Activated CD4-positive, alpha-beta T cell treated with anti-CD3 and anti-CD28 coated beads for 36 hours (primary cell): ENCODE measurements at regions of chr22 and their contacts with region 1.

Region 1: DNA sequence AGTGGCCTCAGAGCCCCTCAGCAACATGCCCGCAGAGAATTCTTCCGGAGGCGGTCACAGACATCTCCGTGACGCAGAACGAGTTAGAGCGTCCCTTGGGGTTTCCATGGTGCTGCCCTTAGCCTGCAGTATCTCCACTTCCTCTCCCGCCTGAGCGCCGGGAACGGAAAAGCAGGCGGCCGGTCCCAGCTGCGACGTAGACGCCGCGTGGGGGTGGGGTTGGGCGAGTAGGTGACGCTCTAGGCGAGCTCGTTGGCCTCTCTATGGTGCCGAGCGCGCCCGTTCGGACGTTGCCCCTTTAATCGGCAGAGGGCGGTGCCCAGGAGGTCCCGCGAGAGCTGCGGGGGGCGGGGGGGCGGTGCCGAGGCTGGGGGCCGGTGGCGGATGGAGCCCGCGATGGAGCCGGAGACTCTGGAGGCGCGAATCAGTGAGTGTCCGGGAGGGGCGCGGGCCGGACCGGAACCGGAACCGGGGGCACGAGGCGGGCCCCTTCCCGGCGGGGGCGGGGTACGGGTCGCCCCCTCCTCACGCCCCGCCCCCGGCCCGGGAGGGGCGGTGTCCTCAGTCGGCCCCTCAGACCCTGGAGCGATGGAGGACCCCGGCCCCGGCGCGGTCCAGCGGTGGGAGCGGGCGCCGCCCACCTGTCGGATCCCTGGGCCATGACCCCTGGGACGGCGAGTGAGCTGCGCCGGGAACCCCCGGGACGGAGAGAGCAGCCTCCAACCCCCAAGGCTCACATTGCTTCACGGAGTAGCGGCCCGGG is at the start of gene GGA1:
- DNase-seq: peak; percentile 99
- ATAC-seq: peak; percentile 82
- H3K4me3 Mint-ChIP-seq: peak within 1 kb of the TSS; percentile 89
- H3K27ac Mint-ChIP-seq: peak within 1 kb of the TSS; percentile 99
- H3K4me1 Mint-ChIP-seq: peaks cover 51% of the 10 kb centered on the region
- H3K27me3 Mint-ChIP-seq: no peaks in the 10 kb centered on the region
- total RNA-seq, gene GGA1: 55.4 to 66.6 TPM

Region 2: GRCh38 chr22:37486224-37486845 is 122.3 kb before region 1 on chr22 and contains the start of gene MFNG:
- CTCF ChIA-PET with region 1: interaction called, 3 read pairs
- POLR2A ChIA-PET with region 1: no interaction called
- intact Hi-C with region 1: loop called in 1 of 2 experiments (anchors 1 kb)
- DNase-seq: peak; percentile 89
- ATAC-seq: peak; percentile 70
- H3K4me3 Mint-ChIP-seq: peak within 1 kb of the TSS; percentile 92
- H3K27ac Mint-ChIP-seq: peak within 1 kb of the TSS; percentile 92
- H3K4me1 Mint-ChIP-seq: peaks cover 64% of the 10 kb centered on the region
- H3K27me3 Mint-ChIP-seq: no peaks in the 10 kb centered on the region
- total RNA-seq, gene MFNG: 108 to 125 TPM

Region 3: GRCh38 chr22:37623075-37624016 is 14.7 kb after region 1 on chr22:
- CTCF ChIA-PET with region 1: interaction called, 17 read pairs
- POLR2A ChIA-PET with region 1: interaction called, 4 read pairs
- intact Hi-C with region 1: loop called in 1 of 2 experiments (anchors 2 kb)
- DNase-seq: peak; percentile 88
- ATAC-seq: peak; percentile 83
- H3K4me3 Mint-ChIP-seq: no peak overlapping the region
- H3K27ac Mint-ChIP-seq: peak overlapping the region; percentile 89
- H3K4me1 Mint-ChIP-seq: peaks cover 43% of the 10 kb centered on the region
- H3K27me3 Mint-ChIP-seq: no peaks in the 10 kb centered on the region

Region 4: DNA sequence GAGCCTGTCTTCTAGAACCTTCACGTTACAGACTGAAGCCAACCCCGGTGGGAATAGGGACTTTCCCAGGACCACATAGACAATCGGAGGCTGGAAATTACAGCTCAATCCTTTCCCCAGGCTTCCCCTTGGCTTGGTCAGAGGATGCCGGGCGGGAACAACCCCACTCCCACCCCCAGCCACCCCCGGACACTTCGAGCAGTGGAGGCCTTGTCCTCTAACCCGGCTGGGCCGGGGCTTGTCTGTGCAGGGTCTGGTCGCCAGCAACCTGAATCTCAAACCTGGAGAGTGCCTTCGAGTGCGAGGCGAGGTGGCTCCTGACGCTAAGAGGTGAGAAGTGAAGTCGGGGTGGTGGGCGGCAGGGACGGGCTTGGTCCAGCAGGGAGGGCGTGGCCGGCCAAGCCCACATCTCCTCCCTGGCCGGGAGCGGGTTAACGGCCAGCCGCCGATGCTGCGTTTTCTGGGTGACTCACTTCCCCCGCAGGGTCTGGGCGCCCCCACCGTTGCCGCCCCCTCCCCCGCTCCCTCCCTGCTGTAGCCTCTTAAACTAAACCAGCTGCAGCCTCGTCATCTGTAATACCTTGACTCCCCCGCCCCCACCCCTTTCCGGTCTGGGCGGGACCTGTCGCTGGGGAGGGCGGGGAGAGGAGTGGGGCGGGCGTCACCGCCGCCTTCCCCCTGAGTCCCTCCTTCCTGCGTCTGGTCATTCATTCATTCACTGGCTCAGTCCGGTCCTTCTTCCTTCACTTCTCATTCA is 68.3 kb after region 1 on chr22:
- CTCF ChIA-PET with region 1: interaction called, 11 read pairs
- POLR2A ChIA-PET with region 1: interaction called, 4 read pairs
- intact Hi-C with region 1: loop called (anchors 1 to 2 kb)
- DNase-seq: peak; percentile 97
- ATAC-seq: peak; percentile 78
- H3K4me3 Mint-ChIP-seq: peak overlapping the region; percentile 89
- H3K27ac Mint-ChIP-seq: peak overlapping the region; percentile 96
- H3K4me1 Mint-ChIP-seq: peaks cover 57% of the 10 kb centered on the region
- H3K27me3 Mint-ChIP-seq: no peaks in the 10 kb centered on the region

Region 5: GRCh38 chr22:37807410-37808293 is 199.0 kb after region 1 on chr22 and contains the start of gene GCAT:
- CTCF ChIA-PET with region 1: no interaction called
- POLR2A ChIA-PET with region 1: no interaction called
- intact Hi-C with region 1: loop called in 1 of 2 experiments (anchors 1 kb)
- DNase-seq: peak; percentile 97
- ATAC-seq: peak; percentile 97
- H3K4me3 Mint-ChIP-seq: peak within 1 kb of the TSS; percentile 78
- H3K27ac Mint-ChIP-seq: peak within 1 kb of the TSS; percentile 31
- H3K4me1 Mint-ChIP-seq: peaks cover 41% of the 10 kb centered on the region
- H3K27me3 Mint-ChIP-seq: peaks cover 37% of the 10 kb centered on the region
- total RNA-seq, gene GCAT: 21.3 to 22.4 TPM

Region 6: GRCh38 chr22:38181453-38182247 is 573.0 kb after region 1 on chr22 and contains the start of gene PLA2G6:
- CTCF ChIA-PET with region 1: no interaction called
- POLR2A ChIA-PET with region 1: no interaction called
- intact Hi-C with region 1: loop called in 1 of 2 experiments (anchors 1 kb)
- DNase-seq: peak; percentile 99
- ATAC-seq: peak; percentile 92
- H3K4me3 Mint-ChIP-seq: peak within 1 kb of the TSS; percentile 96
- H3K27ac Mint-ChIP-seq: peak within 1 kb of the TSS; percentile 98
- H3K4me1 Mint-ChIP-seq: peaks cover 32% of the 10 kb centered on the region
- H3K27me3 Mint-ChIP-seq: no peaks in the 10 kb centered on the region
- total RNA-seq, gene PLA2G6: 54.0 to 57.3 TPM